ENCODE measurements at regions of chr14 and their contacts with region 1.

Region 1: GRCh38 chr14:72008666-72009065 is 76.4 kb downstream of the RGS6 start:
- DNase-seq: no peak
- H3K4me3 ChIP-seq: no peak overlapping the region
- H3K4me3 Mint-ChIP-seq: no peak overlapping the region
- H3K27ac ChIP-seq: no peak overlapping the region
- H3K27ac Mint-ChIP-seq: no peak overlapping the region
- H3K4me1 ChIP-seq: no peaks in the 10 kb centered on the region
- H3K4me1 Mint-ChIP-seq: no peaks in the 10 kb centered on the region
- H3K27me3 ChIP-seq: no peaks in the 10 kb centered on the region
- H3K27me3 Mint-ChIP-seq: peaks cover 5 to 6% of the 10 kb centered on the region in 2 donors

Region 2: GRCh38 chr14:72023722-72024407 is 15.2 kb after region 1 on chr14:
- CTCF ChIA-PET with region 1: interaction called, 12 read pairs
- POLR2A ChIA-PET with region 1: no interaction called
- intact Hi-C with region 1: no loop called
- DNase-seq: peak; percentile 9 to 40 (median 20)
- H3K4me3 ChIP-seq: no peak overlapping the region
- H3K4me3 Mint-ChIP-seq: no peak overlapping the region
- H3K27ac ChIP-seq: no peak overlapping the region
- H3K27ac Mint-ChIP-seq: no peak overlapping the region
- H3K4me1 ChIP-seq: no peaks in the 10 kb centered on the region
- H3K4me1 Mint-ChIP-seq: no peaks in the 10 kb centered on the region
- H3K27me3 ChIP-seq: no peaks in the 10 kb centered on the region
- H3K27me3 Mint-ChIP-seq: peaks cover 22 to 27% of the 10 kb centered on the region in 2 donors